ENCODE measurements at regions of chr5 and their contacts with region 1.

Region 1: GRCh38 chr5:172006321-172007174 is at the start of gene FBXW11:
- DNase-seq: peak; percentile 98
- H3K4me3 ChIP-seq: peak within 1 kb of the TSS; percentile 95
- H3K27ac ChIP-seq: peak within 1 kb of the TSS; percentile 69
- H3K4me1 ChIP-seq: peaks cover 35% of the 10 kb centered on the region
- CTCF ChIP-seq: no peak
- total RNA-seq, gene FBXW11: 33.0 and 40.9 TPM in 2 replicates

Region 2: GRCh38 chr5:171387345-171387969 is 619.1 kb before region 1 on chr5 and contains the start of gene NPM1:
- CTCF ChIA-PET with region 1: no interaction called
- POLR2A ChIA-PET with region 1: interaction called, 3 read pairs
- intact Hi-C with region 1: loop called (anchors 5 kb)
- DNase-seq: peak; percentile 98
- H3K4me3 ChIP-seq: peak within 1 kb of the TSS; percentile 99
- H3K27ac ChIP-seq: peak within 1 kb of the TSS; percentile 82
- H3K4me1 ChIP-seq: peaks cover 37% of the 10 kb centered on the region
- CTCF ChIP-seq: no peak
- total RNA-seq, gene NPM1: 1,091 and 1,434 TPM in 2 replicates

Region 3: DNA sequence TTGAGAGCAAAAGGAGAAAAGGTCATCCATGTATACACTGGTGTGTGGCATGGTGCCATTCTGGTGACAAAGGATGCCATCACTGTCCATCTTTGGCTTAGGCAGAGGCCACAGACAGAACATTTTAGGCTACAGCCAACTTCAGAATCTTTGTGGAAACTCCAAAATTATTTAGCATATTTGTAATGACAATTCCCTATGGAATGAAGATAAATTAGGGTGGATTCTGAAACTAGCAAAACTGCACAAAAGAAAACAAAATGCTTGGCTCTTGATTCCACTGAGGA is 92.6 kb before region 1 on chr5:
- CTCF ChIA-PET with region 1: interaction called, 7 read pairs
- POLR2A ChIA-PET with region 1: interaction called, 17 read pairs
- intact Hi-C with region 1: loop called (anchors 1 kb)
- DNase-seq: no peak
- H3K4me3 ChIP-seq: no peak overlapping the region
- H3K27ac ChIP-seq: no peak overlapping the region
- H3K4me1 ChIP-seq: peaks cover 5% of the 10 kb centered on the region
- CTCF ChIP-seq: no peak

Region 4: DNA sequence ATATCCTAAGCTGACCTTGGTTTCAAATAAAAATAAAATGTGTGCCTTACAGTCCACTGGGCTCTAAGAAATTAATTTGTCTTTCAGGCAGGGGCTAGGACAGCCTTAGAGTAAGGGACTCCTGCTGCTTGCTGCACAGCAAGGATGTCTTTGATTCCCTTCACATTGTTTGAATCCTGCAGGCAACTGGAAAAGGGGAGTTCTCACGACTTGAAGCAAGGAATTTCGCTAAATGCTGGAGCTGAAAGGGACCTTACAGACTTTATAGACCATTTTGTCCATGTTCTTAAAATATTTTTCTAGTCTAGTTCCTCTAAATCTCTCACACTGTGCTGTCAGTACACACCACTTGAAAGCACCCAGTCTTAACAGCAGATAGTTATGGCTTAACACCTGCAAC is 35.7 kb before region 1 on chr5:
- CTCF ChIA-PET with region 1: no interaction called
- POLR2A ChIA-PET with region 1: interaction called, 6 read pairs
- intact Hi-C with region 1: loop called (anchors 1 kb)
- DNase-seq: peak; percentile 11
- H3K4me3 ChIP-seq: no peak overlapping the region
- H3K27ac ChIP-seq: no peak overlapping the region
- H3K4me1 ChIP-seq: peaks cover 36% of the 10 kb centered on the region
- CTCF ChIP-seq: no peak

Region 5: DNA sequence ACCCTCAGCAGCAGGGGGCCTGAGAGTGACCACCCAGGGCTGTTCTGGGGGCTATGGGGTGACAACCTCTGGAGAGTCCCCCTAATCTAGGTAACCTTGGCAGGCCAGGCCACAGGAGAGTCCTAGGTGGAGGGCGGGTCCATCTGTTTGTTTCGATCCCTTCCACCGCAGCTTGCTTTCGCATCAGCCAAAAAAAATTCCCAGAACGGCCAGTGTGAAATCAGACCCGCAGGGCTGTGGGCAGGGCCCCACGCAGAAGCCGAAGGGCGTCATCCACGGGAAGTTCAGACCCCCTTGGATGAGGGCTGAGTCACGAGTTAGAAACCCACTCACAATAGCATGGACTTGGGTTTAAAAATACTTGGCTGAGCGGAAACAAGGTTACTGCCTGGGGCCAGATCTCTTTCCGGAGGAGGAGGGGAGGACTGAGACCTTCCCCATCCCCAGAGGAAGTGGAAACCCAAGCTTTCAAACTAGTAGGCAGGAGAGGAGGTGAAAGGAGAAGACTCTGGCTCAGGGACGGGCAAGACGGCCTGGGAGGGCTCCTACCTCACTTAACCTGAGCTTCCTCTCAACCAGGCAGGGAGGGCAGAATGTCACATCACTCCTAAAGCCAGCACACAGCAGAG is 172.9 kb after region 1 on chr5:
- CTCF ChIA-PET with region 1: interaction called, 4 read pairs
- POLR2A ChIA-PET with region 1: interaction called, 11 read pairs
- intact Hi-C with region 1: no loop called
- DNase-seq: peak; percentile 62
- H3K4me3 ChIP-seq: peak overlapping the region; percentile 60
- H3K27ac ChIP-seq: peak overlapping the region; percentile 87
- H3K4me1 ChIP-seq: peaks cover 51% of the 10 kb centered on the region
- CTCF ChIP-seq: no peak

Region 6: GRCh38 chr5:172283020-172283861 is 276.7 kb after region 1 on chr5 and contains the start of gene UBTD2:
- CTCF ChIA-PET with region 1: no interaction called
- POLR2A ChIA-PET with region 1: interaction called, 4 read pairs
- intact Hi-C with region 1: loop called (anchors 5 kb)
- DNase-seq: peak; percentile 82
- H3K4me3 ChIP-seq: peak within 1 kb of the TSS; percentile 94
- H3K27ac ChIP-seq: peak within 1 kb of the TSS; percentile 44
- H3K4me1 ChIP-seq: peaks cover 25% of the 10 kb centered on the region
- CTCF ChIP-seq: peak; percentile 67; the same call in 1 of the 2 replicates
- total RNA-seq, gene UBTD2: 14.7 and 16.0 TPM in 2 replicates